ENCODE measurements at regions of chr12 and their contacts with region 1.

Region 1: DNA sequence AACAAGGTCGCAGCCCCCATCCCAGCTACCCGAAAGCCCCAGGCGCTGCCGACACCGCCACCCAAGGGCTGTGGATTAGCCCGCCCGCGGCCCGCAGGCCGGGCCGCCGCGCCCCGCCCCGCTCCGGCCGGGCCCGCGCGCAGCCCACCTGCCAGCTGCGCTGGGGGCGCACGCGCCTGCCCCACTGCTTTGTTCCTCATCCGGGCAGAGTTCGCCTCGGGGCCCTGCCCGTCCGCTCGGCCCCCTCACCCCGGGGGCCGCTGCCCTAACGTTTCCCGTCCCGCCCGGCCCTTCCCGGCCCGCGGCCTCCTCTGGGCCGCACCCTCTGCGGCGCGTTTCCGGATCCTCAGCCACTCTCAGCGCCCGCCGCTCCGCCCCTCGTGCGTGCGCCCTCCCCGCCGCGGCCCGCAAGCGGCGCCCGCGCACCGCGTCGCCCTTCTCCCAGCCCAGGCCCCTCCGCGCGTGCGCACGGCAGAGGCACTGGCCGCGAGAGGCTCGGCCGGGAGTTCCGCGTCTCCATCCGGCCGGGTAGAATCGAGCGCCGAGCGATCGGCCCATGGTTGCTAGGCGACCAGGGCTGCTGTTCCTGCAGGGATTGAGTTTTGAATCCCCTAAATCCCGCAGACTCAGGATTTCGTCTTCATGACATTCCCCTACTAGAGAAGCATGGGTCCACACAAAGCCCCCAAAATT is at the start of gene PRDM4:
- DNase-seq: peak; percentile 85 to 98
- H3K4me3 ChIP-seq: peak within 1 kb of the TSS; percentile 71 to 92
- H3K27ac ChIP-seq: peak within 1 kb of the TSS; percentile 57 to 65
- H3K4me1 ChIP-seq: peaks cover 0 to 22% of the 10 kb centered on the region in 2 donors
- H3K27me3 ChIP-seq: no peaks in the 10 kb centered on the region
- CTCF ChIP-seq: peak in 1 of 3 experiments; percentile 39
- total RNA-seq, gene PRDM4: 7.3 TPM

Region 2: DNA sequence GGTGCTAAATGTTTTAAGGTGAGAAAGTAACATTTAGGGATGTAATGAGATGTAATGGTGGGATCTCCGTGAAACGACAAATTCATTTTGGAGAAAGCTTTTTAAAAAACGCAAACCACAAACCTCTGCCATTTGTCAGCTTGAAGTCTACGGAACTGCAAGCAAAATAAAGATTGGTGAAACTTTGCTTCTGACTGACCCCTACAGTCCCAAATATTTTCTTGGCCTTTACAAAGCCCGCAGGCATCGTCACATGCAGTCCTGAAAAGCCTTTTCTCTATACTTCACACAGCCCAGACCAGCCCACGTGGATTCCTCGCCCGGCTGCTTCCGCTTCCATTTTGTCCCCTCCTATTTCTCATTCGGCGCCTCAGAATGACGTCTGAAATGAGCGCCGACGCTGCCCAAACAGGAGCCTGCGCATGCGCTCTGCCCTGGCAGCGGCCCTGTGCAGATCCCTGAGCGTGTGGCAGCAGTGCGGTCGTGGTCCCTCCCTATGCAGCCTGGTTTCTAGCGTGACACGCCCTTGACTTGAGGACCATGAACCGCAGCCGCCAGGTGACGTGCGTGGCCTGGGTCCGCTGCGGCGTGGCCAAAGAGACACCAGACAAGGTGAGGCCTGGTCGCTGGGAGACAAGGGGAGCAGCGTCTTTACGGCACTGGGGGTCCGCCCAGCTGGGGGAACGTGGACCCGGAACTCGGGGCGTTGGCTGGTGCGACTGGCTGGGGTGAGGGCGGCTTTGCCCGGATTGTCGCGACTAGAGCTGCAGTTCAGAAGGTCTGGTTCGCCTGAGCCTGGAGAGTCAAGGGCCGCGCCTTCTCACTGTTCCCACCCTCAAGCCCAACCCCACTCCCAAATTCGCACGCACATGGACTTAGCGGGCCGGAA is 75.4 kb before region 1 on chr12 and contains the start of gene PWP1:
- intact Hi-C with region 1: loop called (anchors 1 kb)
- DNase-seq: peak; percentile 75 to 97
- H3K4me3 ChIP-seq: peak within 1 kb of the TSS; percentile 95
- H3K27ac ChIP-seq: peak within 1 kb of the TSS; percentile 66 to 72
- H3K4me1 ChIP-seq: peaks cover 0 to 10% of the 10 kb centered on the region in 2 donors
- H3K27me3 ChIP-seq: no peaks in the 10 kb centered on the region
- CTCF ChIP-seq: no peak
- total RNA-seq, gene PWP1: 57.3 TPM

Region 3: GRCh38 chr12:108468201-108468968 is 707.4 kb after region 1 on chr12:
- intact Hi-C with region 1: no loop called
- DNase-seq: no peak
- H3K4me3 ChIP-seq: no peak overlapping the region
- H3K27ac ChIP-seq: no peak overlapping the region
- H3K4me1 ChIP-seq: no peaks in the 10 kb centered on the region
- H3K27me3 ChIP-seq: no peaks in the 10 kb centered on the region
- CTCF ChIP-seq: no peak

Measured in ascending aorta (tissue), 2 donors.